ENCODE measurements at regions of chr16 and their contacts with region 1.

Region 1: GRCh38 chr16:2500918-2501750 is 12.6 kb upstream of the ATP6V0C start:
- DNase-seq: peak; percentile 71 to 77 (median 74)
- H3K4me3 ChIP-seq: no peak overlapping the region
- H3K4me3 Mint-ChIP-seq: no peak overlapping the region
- H3K27ac ChIP-seq: no peak overlapping the region
- H3K27ac Mint-ChIP-seq: no peak overlapping the region
- H3K4me1 ChIP-seq: peaks cover 31 to 36% of the 10 kb centered on the region in 2 donors
- H3K4me1 Mint-ChIP-seq: peaks cover 22% of the 10 kb centered on the region
- H3K27me3 ChIP-seq: no peaks in the 10 kb centered on the region
- H3K27me3 Mint-ChIP-seq: no peaks in the 10 kb centered on the region
- CTCF ChIP-seq: peak; percentile 99

Region 2: DNA sequence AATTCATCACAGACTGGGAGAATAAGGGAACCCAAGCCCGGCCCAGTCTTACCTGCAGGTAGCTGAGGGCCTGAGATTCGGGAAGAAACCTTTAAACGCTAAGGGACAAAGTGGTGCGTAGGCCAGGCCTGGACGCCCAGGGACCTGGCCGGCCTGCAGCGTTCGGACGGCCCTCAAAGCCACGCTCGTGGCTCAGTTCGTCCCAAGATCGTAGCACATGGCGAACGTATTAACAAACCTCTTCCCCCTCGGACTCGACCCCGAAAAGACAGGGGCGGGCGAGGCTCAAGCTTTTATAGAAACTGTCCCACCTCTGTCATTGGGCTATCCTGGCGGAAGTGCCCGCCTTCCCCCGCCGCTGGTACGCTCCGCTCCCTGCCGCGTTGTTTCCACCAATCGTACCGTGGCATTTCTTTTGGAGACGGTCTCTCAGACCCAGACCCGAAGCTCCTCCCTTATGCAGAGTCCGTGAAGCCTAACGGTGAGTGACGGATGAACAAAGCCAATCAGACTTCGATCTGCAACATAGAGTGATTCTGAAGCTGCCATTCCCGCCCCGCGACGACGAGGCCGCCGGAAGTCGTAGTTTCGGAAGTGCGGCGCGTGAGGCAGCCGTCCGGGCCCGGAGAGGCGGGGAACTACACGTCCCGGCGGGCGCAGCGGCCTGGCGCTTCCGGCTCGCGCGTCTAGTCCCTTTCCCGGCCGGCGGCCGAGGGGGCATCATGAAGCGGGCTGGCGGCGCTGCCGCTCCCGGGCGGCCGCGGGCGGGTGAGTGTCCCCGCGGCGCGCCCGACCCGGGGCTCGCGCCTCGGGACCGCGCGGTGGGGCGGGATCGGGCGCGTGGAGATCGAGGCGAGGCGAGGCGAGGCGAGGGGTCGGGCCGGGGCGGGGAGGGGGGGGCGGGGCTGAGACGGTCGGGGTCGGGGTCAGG is 345.8 kb before region 1 on chr16 and contains the start of gene TRAF7:
- intact Hi-C with region 1: loop called in 1 of 2 experiments (anchors 10 kb)
- DNase-seq: peak; percentile 100
- H3K4me3 ChIP-seq: peak within 1 kb of the TSS; percentile 86 to 97 (median 91)
- H3K4me3 Mint-ChIP-seq: peak within 1 kb of the TSS; percentile 96 to 97
- H3K27ac ChIP-seq: peak within 1 kb of the TSS; percentile 62 to 86
- H3K27ac Mint-ChIP-seq: peak within 1 kb of the TSS; percentile 89 to 95 (median 90)
- H3K4me1 ChIP-seq: peaks cover 38 to 49% of the 10 kb centered on the region in 2 donors
- H3K4me1 Mint-ChIP-seq: peaks cover 55% of the 10 kb centered on the region
- H3K27me3 ChIP-seq: peaks cover 0 to 3% of the 10 kb centered on the region in 2 donors
- H3K27me3 Mint-ChIP-seq: peaks cover 2 to 5% (median 5%) of the 10 kb centered on the region in 3 donors
- CTCF ChIP-seq: no peak
- polyA plus RNA-seq, gene TRAF7: 5.9 to 41.9 (median 6.7) TPM

Region 3: GRCh38 chr16:2278272-2278608 is 222.9 kb before region 1 on chr16:
- intact Hi-C with region 1: loop called in 1 of 2 experiments (anchors 10 kb)
- DNase-seq: no peak
- H3K4me3 ChIP-seq: no peak overlapping the region
- H3K4me3 Mint-ChIP-seq: no peak overlapping the region
- H3K27ac ChIP-seq: no peak overlapping the region
- H3K27ac Mint-ChIP-seq: no peak overlapping the region
- H3K4me1 ChIP-seq: peaks cover 0 to under 1% of the 10 kb centered on the region in 2 donors
- H3K4me1 Mint-ChIP-seq: no peaks in the 10 kb centered on the region
- H3K27me3 ChIP-seq: no peaks in the 10 kb centered on the region
- H3K27me3 Mint-ChIP-seq: peaks cover 2 to 3% (median 3%) of the 10 kb centered on the region in 3 donors
- CTCF ChIP-seq: no peak

Region 4: DNA sequence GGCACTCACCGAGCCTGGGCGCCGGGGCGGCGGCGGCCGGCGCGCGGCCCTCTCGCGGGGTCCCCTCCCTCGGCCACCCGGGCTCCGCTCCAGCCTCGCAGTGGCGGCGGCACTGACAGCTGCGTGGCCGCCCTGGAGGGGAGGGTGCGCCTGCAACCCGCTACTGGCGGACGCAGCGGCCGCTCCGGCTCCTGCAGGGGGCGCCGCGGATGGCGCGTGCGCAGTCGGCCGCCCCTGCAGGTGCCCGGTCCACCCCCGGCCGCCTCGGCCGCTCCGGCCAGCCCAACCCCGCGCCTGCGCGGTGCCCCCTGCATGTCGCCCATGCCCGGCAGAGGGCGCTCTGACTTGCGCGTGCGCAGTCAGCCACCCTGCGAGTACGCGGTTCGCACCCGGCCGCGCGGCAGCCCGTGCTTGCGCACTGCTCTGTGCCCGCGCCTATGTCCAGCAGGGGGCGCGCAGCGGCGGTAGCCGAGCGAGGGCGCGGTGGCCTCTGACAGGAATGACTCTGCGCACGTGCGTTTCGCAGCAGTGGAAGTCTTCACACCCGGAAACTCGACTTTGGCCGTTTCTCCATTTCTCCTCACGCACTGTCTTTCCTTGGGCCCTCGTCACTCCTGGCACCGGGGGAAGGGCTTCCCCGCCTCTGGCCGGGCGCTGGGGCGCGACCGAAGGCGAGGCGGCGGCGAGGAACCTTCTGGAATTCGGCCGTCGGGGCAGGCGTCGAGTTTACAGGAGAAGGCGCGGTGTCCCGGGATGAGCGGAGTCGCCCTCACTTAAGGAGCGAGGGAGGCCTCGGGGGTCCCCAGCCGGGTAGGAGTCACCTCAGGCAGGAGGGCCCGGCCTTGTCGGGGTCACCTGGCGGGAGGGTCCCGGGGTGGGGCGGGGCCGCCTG is 160.3 kb before region 1 on chr16 and contains the start of gene ABCA3:
- intact Hi-C with region 1: loop called in 1 of 2 experiments (anchors 5 kb)
- DNase-seq: peak; percentile 87 to 94 (median 94)
- H3K4me3 ChIP-seq: peak within 1 kb of the TSS; percentile 47 to 75 (median 49)
- H3K4me3 Mint-ChIP-seq: peak within 1 kb of the TSS; percentile 73 to 93
- H3K27ac ChIP-seq: no peak within 1 kb of the TSS
- H3K27ac Mint-ChIP-seq: peak within 1 kb of the TSS in 2 of 7 donors; percentile 2 to 60
- H3K4me1 ChIP-seq: peaks cover 12 to 16% of the 10 kb centered on the region in 2 donors
- H3K4me1 Mint-ChIP-seq: peaks cover 12% of the 10 kb centered on the region
- H3K27me3 ChIP-seq: peaks cover 30 to 65% of the 10 kb centered on the region in 2 donors
- H3K27me3 Mint-ChIP-seq: peaks cover 43 to 66% (median 47%) of the 10 kb centered on the region in 3 donors
- CTCF ChIP-seq: peak; percentile 100
- polyA plus RNA-seq, gene ABCA3: 0.06 to 1.2 (median 0.68) TPM

Region 5: GRCh38 chr16:2429034-2429770 is 71.9 kb before region 1 on chr16 and contains the start of gene CCNF:
- intact Hi-C with region 1: loop called (anchors 5 to 10 kb)
- DNase-seq: peak; percentile 92 to 95 (median 94)
- H3K4me3 ChIP-seq: peak within 1 kb of the TSS; percentile 74 to 94 (median 92)
- H3K4me3 Mint-ChIP-seq: peak within 1 kb of the TSS; percentile 84 to 94
- H3K27ac ChIP-seq: peak within 1 kb of the TSS in 1 of 2 donors; percentile 10
- H3K27ac Mint-ChIP-seq: peak within 1 kb of the TSS in 4 of 7 donors; percentile 17 to 68 (median 32)
- H3K4me1 ChIP-seq: peaks cover 20 to 28% of the 10 kb centered on the region in 2 donors
- H3K4me1 Mint-ChIP-seq: peaks cover 31% of the 10 kb centered on the region
- H3K27me3 ChIP-seq: no peaks in the 10 kb centered on the region
- H3K27me3 Mint-ChIP-seq: peaks cover 0 to 2% (median 0%) of the 10 kb centered on the region in 3 donors
- CTCF ChIP-seq: no peak
- polyA plus RNA-seq, gene CCNF: 0.34 to 0.97 (median 0.68) TPM

Region 6: GRCh38 chr16:2467521-2468151 is 33.5 kb before region 1 on chr16:
- intact Hi-C with region 1: loop called (anchors 5 kb)
- DNase-seq: peak in 1 of 3 donors; percentile 15
- H3K4me3 ChIP-seq: peak overlapping the region in 1 of 3 experiments; percentile 51
- H3K4me3 Mint-ChIP-seq: peak overlapping the region in 1 of 2 donors; percentile 69
- H3K27ac ChIP-seq: no peak overlapping the region
- H3K27ac Mint-ChIP-seq: no peak overlapping the region
- H3K4me1 ChIP-seq: peaks cover 6 to 43% of the 10 kb centered on the region in 2 donors
- H3K4me1 Mint-ChIP-seq: peaks cover 24% of the 10 kb centered on the region
- H3K27me3 ChIP-seq: peaks cover 40 to 51% of the 10 kb centered on the region in 2 donors
- H3K27me3 Mint-ChIP-seq: peaks cover 47 to 63% (median 55%) of the 10 kb centered on the region in 3 donors
- CTCF ChIP-seq: peak; percentile 15

Region 7: GRCh38 chr16:2513405-2514322 is 12.5 kb after region 1 on chr16 and contains the start of gene ATP6V0C:
- intact Hi-C with region 1: no loop called
- DNase-seq: peak; percentile 86 to 88 (median 87)
- H3K4me3 ChIP-seq: peak within 1 kb of the TSS; percentile 73 to 100 (median 92)
- H3K4me3 Mint-ChIP-seq: peak within 1 kb of the TSS; percentile 98 to 99
- H3K27ac ChIP-seq: peak within 1 kb of the TSS; percentile 96
- H3K27ac Mint-ChIP-seq: peak within 1 kb of the TSS; percentile 99 to 100 (median 99)
- H3K4me1 ChIP-seq: peaks cover 73 to 86% of the 10 kb centered on the region in 2 donors
- H3K4me1 Mint-ChIP-seq: peaks cover 82% of the 10 kb centered on the region
- H3K27me3 ChIP-seq: no peaks in the 10 kb centered on the region
- H3K27me3 Mint-ChIP-seq: peaks cover 2 to 6% (median 6%) of the 10 kb centered on the region in 3 donors
- CTCF ChIP-seq: no peak
- polyA plus RNA-seq, gene ATP6V0C: 176 to 310 (median 187) TPM